ENCODE measurements at regions of chr14 and their contacts with region 1.

Region 1: DNA sequence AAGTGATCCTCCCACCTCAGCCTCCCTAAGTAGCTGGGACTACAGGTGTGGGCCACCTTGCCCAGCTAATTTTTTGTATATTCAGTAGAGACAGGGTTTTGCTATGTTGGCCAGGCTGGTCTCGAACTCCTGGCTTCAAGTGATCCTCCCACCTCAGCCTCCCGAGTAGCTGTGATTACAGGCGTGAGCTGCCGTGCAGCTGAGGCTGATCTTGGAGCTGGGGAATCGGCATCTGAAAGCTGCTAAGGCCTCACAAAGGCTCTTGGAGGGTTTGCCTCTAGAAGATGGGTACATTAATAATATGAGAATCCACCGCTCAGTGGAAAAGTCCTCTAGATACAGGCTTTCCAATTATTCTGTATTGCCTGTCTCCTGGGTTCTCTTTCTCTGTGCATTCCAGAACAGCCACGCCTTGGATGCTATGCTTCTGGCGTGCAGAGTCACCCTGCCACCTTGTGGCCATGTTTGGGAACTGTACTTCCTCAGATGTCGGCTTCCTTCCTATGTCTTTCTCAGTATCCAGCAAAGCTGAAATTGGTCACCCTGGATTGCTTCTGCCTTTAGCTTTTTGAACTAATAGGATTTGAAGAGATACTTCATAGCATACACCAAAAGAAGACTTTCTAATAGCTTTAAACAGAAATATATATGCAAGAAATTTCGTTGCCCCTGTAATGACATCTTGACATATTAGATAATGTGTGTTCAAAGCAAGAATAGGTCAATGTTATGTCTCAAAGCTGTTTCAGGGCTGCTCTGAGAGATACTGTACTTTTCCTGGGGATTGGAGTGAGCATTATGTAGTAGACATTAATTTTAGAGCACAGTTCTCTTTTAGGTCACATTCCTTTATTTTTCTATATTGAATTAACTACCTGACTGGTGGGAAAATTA is 75.4 kb downstream of the SNAPC1 start:
- DNase-seq: peak; percentile 49 to 76 (median 67)
- ATAC-seq: peak; percentile 98
- H3K4me3 ChIP-seq: no peak overlapping the region
- H3K4me3 Mint-ChIP-seq: no peak overlapping the region
- H3K27ac ChIP-seq: no peak overlapping the region
- H3K27ac Mint-ChIP-seq: no peak overlapping the region
- H3K4me1 ChIP-seq: no peaks in the 10 kb centered on the region
- H3K4me1 Mint-ChIP-seq: peaks cover 0 to 9% (median 0%) of the 10 kb centered on the region in 7 donors
- H3K27me3 ChIP-seq: no peaks in the 10 kb centered on the region
- H3K27me3 Mint-ChIP-seq: peaks cover 0 to 31% (median 0%) of the 10 kb centered on the region in 5 donors

Region 2: GRCh38 chr14:61269321-61270083 is 568.1 kb before region 1 on chr14:
- CTCF ChIA-PET with region 1: interaction called, 13 read pairs
- POLR2A ChIA-PET with region 1: no interaction called
- intact Hi-C with region 1: loop called (anchors 1 kb)
- DNase-seq: peak; percentile 47 to 78 (median 71)
- ATAC-seq: peak; percentile 96
- H3K4me3 ChIP-seq: peak overlapping the region; percentile 58
- H3K4me3 Mint-ChIP-seq: peak overlapping the region; percentile 60 to 84 (median 77)
- H3K27ac ChIP-seq: no peak overlapping the region
- H3K27ac Mint-ChIP-seq: no peak overlapping the region
- H3K4me1 ChIP-seq: peaks cover 3% of the 10 kb centered on the region in 2 donors
- H3K4me1 Mint-ChIP-seq: peaks cover 0 to 8% (median 4%) of the 10 kb centered on the region in 7 donors
- H3K27me3 ChIP-seq: no peaks in the 10 kb centered on the region
- H3K27me3 Mint-ChIP-seq: peaks cover 27 to 65% (median 46%) of the 10 kb centered on the region in 5 donors

Region 3: GRCh38 chr14:61456720-61457119 is 380.9 kb before region 1 on chr14:
- CTCF ChIA-PET with region 1: interaction called, 24 read pairs
- POLR2A ChIA-PET with region 1: no interaction called
- intact Hi-C with region 1: loop called (anchors 1 kb)
- DNase-seq: peak; percentile 63 to 82 (median 77)
- ATAC-seq: peak; percentile 76
- H3K4me3 ChIP-seq: no peak overlapping the region
- H3K4me3 Mint-ChIP-seq: peak overlapping the region in 5 of 10 donors; percentile 5 to 80 (median 51)
- H3K27ac ChIP-seq: peak overlapping the region; percentile 32
- H3K27ac Mint-ChIP-seq: peak overlapping the region in 8 of 9 donors; percentile 70 to 92 (median 86)
- H3K4me1 ChIP-seq: peaks cover 53 to 59% of the 10 kb centered on the region in 2 donors
- H3K4me1 Mint-ChIP-seq: peaks cover 52 to 93% (median 89%) of the 10 kb centered on the region in 7 donors
- H3K27me3 ChIP-seq: no peaks in the 10 kb centered on the region
- H3K27me3 Mint-ChIP-seq: no peaks in the 10 kb centered on the region

Region 4: DNA sequence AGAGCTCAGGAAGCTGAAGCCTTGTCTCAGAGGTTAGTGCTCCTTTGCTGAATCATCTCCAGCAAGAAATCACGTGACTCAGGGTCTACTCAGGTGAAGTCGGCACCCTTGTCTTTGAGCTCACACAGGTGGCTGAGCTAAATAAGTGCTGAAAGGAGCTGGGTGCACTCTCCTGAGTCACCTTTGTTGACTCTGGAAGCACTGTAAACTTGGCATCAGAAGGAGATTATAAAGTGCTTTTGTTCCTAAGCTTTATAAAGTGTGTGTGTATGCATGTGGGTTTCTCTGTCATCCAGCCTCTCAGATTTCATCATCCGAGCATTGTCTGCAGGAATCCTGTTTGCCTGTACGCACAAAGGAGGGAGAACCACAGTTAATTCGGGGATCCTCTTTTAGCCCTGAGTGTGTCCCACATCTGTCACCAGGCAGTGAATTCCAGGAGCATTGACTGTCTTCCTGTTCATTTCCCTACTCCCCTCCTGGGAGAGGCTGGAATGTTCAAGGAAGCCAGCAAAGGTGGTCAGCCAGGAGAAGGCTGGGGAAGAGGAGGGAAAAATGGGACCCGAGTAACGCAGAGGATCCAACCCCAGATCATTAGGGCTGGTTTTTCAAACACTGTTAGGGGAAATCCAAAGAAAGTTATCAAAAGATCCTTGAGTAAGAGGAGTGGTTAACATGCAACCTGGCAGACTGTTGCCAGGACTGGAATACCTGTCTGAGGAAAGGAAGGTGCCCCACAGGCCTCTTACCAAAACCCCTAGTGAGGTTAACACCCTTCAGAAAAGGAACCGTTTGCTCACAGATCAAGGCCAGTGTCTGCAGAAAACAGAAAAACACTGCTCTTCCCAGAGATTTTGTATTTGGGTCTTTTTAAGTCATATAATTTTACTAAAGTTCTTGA is 299.8 kb before region 1 on chr14:
- CTCF ChIA-PET with region 1: no interaction called
- POLR2A ChIA-PET with region 1: no interaction called
- intact Hi-C with region 1: loop called (anchors 5 to 10 kb)
- DNase-seq: peak in 1 of 9 donors; percentile 29
- ATAC-seq: peak; percentile 24
- H3K4me3 ChIP-seq: no peak overlapping the region
- H3K4me3 Mint-ChIP-seq: peak overlapping the region in 1 of 10 donors; percentile 26
- H3K27ac ChIP-seq: peak overlapping the region; percentile 24
- H3K27ac Mint-ChIP-seq: peak overlapping the region; percentile 38 to 85 (median 66)
- H3K4me1 ChIP-seq: no peaks in the 10 kb centered on the region
- H3K4me1 Mint-ChIP-seq: peaks cover 15 to 74% (median 35%) of the 10 kb centered on the region in 7 donors
- H3K27me3 ChIP-seq: no peaks in the 10 kb centered on the region
- H3K27me3 Mint-ChIP-seq: no peaks in the 10 kb centered on the region

Region 5: DNA sequence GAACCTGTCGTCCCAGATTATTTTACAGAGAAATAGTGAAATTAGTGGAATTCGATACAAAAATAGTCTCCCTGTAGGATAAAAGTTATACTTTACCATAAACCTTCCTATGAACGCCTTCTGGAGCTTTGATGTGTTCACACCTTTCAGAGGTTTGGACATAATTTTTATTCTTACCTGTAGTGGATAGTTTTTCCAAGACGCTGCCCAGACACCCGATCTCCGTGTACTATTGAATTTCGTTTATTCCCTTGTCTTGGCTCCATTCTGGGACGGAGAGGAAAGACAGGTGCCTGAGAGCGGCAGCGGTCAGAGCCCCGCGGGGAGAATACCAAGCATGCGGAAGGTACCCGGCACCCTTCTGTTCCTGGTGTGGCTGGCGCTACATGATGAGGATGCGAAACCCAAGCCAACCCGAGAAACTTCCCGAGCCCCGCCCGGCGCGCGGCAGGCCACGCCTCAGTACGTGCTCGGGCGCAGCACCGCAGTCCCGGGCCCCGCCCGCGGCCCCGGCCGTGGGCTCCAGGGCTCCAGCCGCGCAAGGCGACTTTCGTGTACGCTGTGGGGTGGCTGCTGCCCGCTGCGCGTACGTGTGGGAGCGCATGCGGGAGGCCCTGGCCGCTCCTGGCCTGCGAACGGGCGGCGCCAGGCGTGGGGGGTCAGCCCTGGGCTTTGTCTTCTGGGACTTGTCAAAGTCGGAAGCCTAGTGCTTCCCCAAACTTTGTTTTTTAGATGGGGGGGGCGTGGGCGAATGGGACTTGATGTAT is 86.7 kb before region 1 on chr14:
- CTCF ChIA-PET with region 1: interaction called, 10 read pairs
- POLR2A ChIA-PET with region 1: no interaction called
- intact Hi-C with region 1: loop called (anchors 1 kb)
- DNase-seq: peak; percentile 53 to 89 (median 66)
- ATAC-seq: peak; percentile 92
- H3K4me3 ChIP-seq: peak overlapping the region; percentile 55
- H3K4me3 Mint-ChIP-seq: peak overlapping the region; percentile 75 to 94 (median 85)
- H3K27ac ChIP-seq: peak overlapping the region; percentile 75
- H3K27ac Mint-ChIP-seq: peak overlapping the region; percentile 26 to 88 (median 70)
- H3K4me1 ChIP-seq: no peaks in the 10 kb centered on the region
- H3K4me1 Mint-ChIP-seq: peaks cover 4 to 63% (median 11%) of the 10 kb centered on the region in 7 donors
- H3K27me3 ChIP-seq: no peaks in the 10 kb centered on the region
- H3K27me3 Mint-ChIP-seq: peaks cover 0 to 8% (median 1%) of the 10 kb centered on the region in 5 donors

Region 6: DNA sequence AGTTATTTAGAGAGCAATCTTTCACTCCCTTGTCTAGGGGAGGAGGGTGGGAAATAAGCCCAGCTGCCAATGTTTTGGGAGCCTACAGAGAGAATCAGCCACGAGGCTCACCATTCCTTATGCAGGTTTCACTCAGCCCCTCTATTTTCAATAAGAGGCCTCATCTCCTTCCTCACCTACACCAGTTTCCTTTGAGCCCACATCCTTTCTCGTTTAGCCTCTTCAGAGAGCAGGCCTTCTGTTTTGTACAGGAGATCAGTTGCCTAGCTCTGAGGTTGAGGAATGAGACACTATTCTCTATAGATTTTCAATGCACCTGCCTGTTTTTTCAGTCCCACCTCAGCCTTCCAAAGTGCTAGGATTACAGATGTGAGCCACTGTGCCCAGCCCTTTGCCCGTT is 57.5 kb before region 1 on chr14:
- CTCF ChIA-PET with region 1: interaction called, 11 read pairs
- POLR2A ChIA-PET with region 1: no interaction called
- intact Hi-C with region 1: no loop called
- DNase-seq: peak in 7 of 9 donors; percentile 20 to 62 (median 52)
- ATAC-seq: peak; percentile 46
- H3K4me3 ChIP-seq: no peak overlapping the region
- H3K4me3 Mint-ChIP-seq: peak overlapping the region; percentile 51 to 84 (median 76)
- H3K27ac ChIP-seq: peak overlapping the region; percentile 65
- H3K27ac Mint-ChIP-seq: peak overlapping the region; percentile 61 to 96 (median 92)
- H3K4me1 ChIP-seq: peaks cover 0 to 18% of the 10 kb centered on the region in 2 donors
- H3K4me1 Mint-ChIP-seq: peaks cover 14 to 50% (median 45%) of the 10 kb centered on the region in 7 donors
- H3K27me3 ChIP-seq: no peaks in the 10 kb centered on the region
- H3K27me3 Mint-ChIP-seq: no peaks in the 10 kb centered on the region

Region 7: DNA sequence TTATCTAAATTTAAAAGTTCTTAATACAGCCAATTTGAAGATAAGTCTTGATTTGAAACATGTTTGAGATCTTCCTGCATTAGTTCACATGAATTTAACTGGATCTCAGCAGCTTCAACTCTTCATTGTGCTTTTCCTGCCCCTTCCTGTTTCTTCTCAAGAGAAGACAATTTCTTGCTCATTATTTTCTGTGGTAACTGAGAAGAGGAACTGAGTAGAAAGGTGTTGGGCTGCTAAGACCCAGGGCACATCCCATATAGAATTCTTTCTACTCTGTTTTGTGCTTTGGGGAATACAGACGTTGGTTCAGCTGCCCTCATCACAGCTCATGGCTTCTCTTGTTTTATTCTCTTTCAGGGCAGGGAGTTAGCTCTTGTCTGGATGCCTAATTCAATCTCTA is 34.9 kb after region 1 on chr14:
- CTCF ChIA-PET with region 1: no interaction called
- POLR2A ChIA-PET with region 1: no interaction called
- intact Hi-C with region 1: no loop called
- DNase-seq: no peak
- ATAC-seq: no peak
- H3K4me3 ChIP-seq: no peak overlapping the region
- H3K4me3 Mint-ChIP-seq: no peak overlapping the region
- H3K27ac ChIP-seq: no peak overlapping the region
- H3K27ac Mint-ChIP-seq: no peak overlapping the region
- H3K4me1 ChIP-seq: no peaks in the 10 kb centered on the region
- H3K4me1 Mint-ChIP-seq: peaks cover 0 to 9% (median 0%) of the 10 kb centered on the region in 7 donors
- H3K27me3 ChIP-seq: no peaks in the 10 kb centered on the region
- H3K27me3 Mint-ChIP-seq: peaks cover 17 to 64% (median 33%) of the 10 kb centered on the region in 5 donors

Region 8: DNA sequence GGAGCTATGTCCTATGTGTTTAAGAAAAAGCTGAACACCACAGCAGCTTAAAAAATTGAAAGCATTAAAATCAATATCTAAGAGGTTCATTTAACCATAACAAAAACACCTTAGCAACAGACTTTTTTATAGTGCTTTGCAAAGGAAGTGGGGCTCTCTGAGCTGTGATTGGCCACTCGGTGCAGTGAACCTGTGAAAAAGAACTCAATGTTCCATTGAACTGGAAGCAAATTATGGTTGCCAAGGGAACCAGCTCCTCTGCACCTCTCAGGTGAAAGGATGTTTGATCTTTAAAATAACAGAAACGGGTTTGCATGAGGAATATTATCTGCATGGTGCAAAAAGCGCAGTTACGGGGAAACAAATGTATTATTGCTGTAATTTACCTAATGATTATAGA is 74.0 kb after region 1 on chr14:
- CTCF ChIA-PET with region 1: no interaction called
- POLR2A ChIA-PET with region 1: no interaction called
- intact Hi-C with region 1: no loop called
- DNase-seq: peak in 7 of 9 donors; percentile 36 to 73 (median 66)
- ATAC-seq: peak; percentile 77
- H3K4me3 ChIP-seq: no peak overlapping the region
- H3K4me3 Mint-ChIP-seq: peak overlapping the region in 3 of 10 donors; percentile 12 to 33 (median 27)
- H3K27ac ChIP-seq: no peak overlapping the region
- H3K27ac Mint-ChIP-seq: peak overlapping the region in 5 of 9 donors; percentile 32 to 91 (median 64)
- H3K4me1 ChIP-seq: no peaks in the 10 kb centered on the region
- H3K4me1 Mint-ChIP-seq: peaks cover 0 to 16% (median 14%) of the 10 kb centered on the region in 7 donors
- H3K27me3 ChIP-seq: no peaks in the 10 kb centered on the region
- H3K27me3 Mint-ChIP-seq: peaks cover 0 to 30% (median 4%) of the 10 kb centered on the region in 5 donors

Region 9: GRCh38 chr14:62117010-62117750 is 279.6 kb after region 1 on chr14:
- CTCF ChIA-PET with region 1: no interaction called
- POLR2A ChIA-PET with region 1: no interaction called
- intact Hi-C with region 1: no loop called
- DNase-seq: peak; percentile 28 to 58 (median 50)
- ATAC-seq: peak; percentile 90
- H3K4me3 ChIP-seq: peak overlapping the region; percentile 46
- H3K4me3 Mint-ChIP-seq: peak overlapping the region; percentile 40 to 84 (median 74)
- H3K27ac ChIP-seq: no peak overlapping the region
- H3K27ac Mint-ChIP-seq: no peak overlapping the region
- H3K4me1 ChIP-seq: peaks cover 0 to 7% of the 10 kb centered on the region in 2 donors
- H3K4me1 Mint-ChIP-seq: peaks cover 0 to 12% (median 9%) of the 10 kb centered on the region in 7 donors
- H3K27me3 ChIP-seq: peaks cover 0 to 12% of the 10 kb centered on the region in 2 donors
- H3K27me3 Mint-ChIP-seq: peaks cover 66 to 89% (median 70%) of the 10 kb centered on the region in 5 donors

Measured in naive thymus-derived CD4-positive, alpha-beta T cell (primary cell).